Activated T-helper 1 cell treated with anti-CD3 and anti-CD28 coated beads, Interleukin-12 subunit alpha, Interleukin-12 subunit beta, Interleukin-2, Interleukin-4 antibody, amounts not matched to agents 30 ng/mL and 10 ng/mL and 1 ng/mL, durations not matched to agents 14 hours and 24 hours and 36 hours (primary cell): ENCODE measurements at regions of chr11 and their contacts with region 1.

Region 1: GRCh38 chr11:72080256-72080974 is at the starts of genes LRRC51 and NUMA1:
- DNase-seq: peak; percentile 99
- H3K4me3 Mint-ChIP-seq: peak within 1 kb of the TSS; percentile 95
- H3K27ac Mint-ChIP-seq: peak within 1 kb of the TSS; percentile 93
- H3K4me1 Mint-ChIP-seq: peaks cover 49% of the 10 kb centered on the region
- H3K27me3 Mint-ChIP-seq: no peaks in the 10 kb centered on the region
- total RNA-seq, gene LRRC51: 5.7 and 8.2 TPM in 2 replicates
- total RNA-seq, gene NUMA1: 141 and 150 TPM in 2 replicates

Region 2: DNA sequence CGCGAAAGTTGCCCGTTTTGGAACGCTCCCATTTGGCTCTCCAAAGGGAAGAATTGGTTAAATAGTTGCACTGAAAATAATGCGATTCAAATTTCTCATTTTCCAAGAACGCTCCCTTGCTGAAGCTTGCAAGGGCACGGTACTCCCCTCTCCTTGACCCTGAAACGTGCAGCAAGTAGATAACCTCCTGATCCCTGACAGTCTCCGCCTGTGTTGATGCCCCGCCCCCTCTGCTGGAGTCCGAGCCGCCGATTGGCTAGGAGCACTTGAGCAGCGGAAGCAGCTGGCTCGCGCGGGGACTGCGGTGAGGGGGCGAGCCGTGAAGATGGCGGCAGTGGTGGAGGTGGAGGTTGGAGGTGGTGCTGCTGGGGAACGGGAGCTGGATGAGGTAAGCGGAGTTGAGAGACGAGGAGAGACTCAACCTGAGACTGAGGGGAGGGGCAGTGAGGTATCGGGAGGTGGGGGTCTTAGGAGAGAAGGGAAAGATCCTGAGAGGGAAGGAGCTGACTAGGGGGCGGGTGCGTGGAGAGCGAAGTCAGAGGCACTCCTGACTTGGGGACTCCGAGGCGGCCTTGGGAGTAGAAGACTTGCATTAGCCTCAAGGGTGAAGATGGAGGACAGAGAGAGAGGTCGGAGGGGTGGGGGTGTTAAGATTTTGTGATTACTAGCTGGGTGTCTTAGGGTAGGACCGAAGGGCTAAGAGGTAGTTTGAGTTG is 151.5 kb before region 1 on chr11 and contains the start of gene RNF121:
- intact Hi-C with region 1: loop called (anchors 1 kb)
- DNase-seq: peak; percentile 96
- H3K4me3 Mint-ChIP-seq: peak within 1 kb of the TSS; percentile 98
- H3K27ac Mint-ChIP-seq: peak within 1 kb of the TSS; percentile 95
- H3K4me1 Mint-ChIP-seq: peaks cover 51% of the 10 kb centered on the region
- H3K27me3 Mint-ChIP-seq: no peaks in the 10 kb centered on the region
- total RNA-seq, gene RNF121: 65.8 and 70.3 TPM in 2 replicates

Region 3: GRCh38 chr11:72040726-72041441 is 39.5 kb before region 1 on chr11:
- intact Hi-C with region 1: loop called (anchors 1 kb)
- DNase-seq: peak; percentile 59
- H3K4me3 Mint-ChIP-seq: no peak overlapping the region
- H3K27ac Mint-ChIP-seq: no peak overlapping the region
- H3K4me1 Mint-ChIP-seq: peaks cover 23% of the 10 kb centered on the region
- H3K27me3 Mint-ChIP-seq: no peaks in the 10 kb centered on the region

Region 4: GRCh38 chr11:72102946-72103753 is 22.7 kb after region 1 on chr11 and contains the start of gene LAMTOR1:
- intact Hi-C with region 1: loop called (anchors 1 kb)
- DNase-seq: peak; percentile 97
- H3K4me3 Mint-ChIP-seq: peak within 1 kb of the TSS; percentile 95
- H3K27ac Mint-ChIP-seq: peak within 1 kb of the TSS; percentile 87
- H3K4me1 Mint-ChIP-seq: peaks cover 41% of the 10 kb centered on the region
- H3K27me3 Mint-ChIP-seq: no peaks in the 10 kb centered on the region
- total RNA-seq, gene LAMTOR1: 70.2 and 77.7 TPM in 2 replicates

Region 5: DNA sequence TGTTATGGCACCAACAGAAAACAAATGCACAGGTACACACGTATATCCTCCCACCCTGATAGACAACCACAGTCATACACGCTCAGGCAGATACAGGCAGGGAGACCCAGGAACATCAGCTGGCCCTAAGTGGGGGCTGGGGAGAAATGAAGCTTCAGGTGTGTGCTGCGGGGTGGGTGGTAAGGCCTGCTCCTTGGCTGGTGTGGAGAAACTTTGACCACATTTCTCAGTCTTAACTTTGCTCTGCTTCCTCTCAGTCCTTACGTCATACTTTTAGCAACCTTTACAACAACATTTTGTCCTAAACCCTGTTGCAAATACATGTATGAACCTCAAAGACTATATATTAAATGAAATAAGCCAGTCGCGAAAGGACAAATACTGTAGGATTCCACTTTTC is 38.8 kb after region 1 on chr11:
- intact Hi-C with region 1: no loop called
- DNase-seq: no peak
- H3K4me3 Mint-ChIP-seq: no peak overlapping the region
- H3K27ac Mint-ChIP-seq: no peak overlapping the region
- H3K4me1 Mint-ChIP-seq: no peaks in the 10 kb centered on the region
- H3K27me3 Mint-ChIP-seq: peaks cover 2% of the 10 kb centered on the region

Region 6: DNA sequence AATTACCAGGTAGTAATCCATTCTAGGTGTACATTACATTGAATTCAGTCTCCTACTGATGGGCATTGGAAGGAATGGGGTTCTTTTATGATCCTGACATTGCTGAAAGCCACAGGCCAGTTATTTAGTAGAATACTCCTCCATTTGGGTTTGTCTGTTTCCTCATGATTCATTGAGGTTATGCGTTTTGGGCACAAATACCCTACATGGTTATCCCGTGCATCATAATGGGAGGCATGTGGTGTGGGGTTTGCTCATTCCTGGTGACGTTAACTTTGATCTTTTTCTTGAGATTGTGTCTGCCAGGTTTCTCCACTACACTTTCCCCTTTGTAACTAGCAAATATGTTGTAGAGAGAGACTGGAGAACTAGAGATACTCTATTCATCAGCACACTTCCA is 60.7 kb after region 1 on chr11:
- intact Hi-C with region 1: loop called (anchors 5 kb)
- DNase-seq: no peak
- H3K4me3 Mint-ChIP-seq: no peak overlapping the region
- H3K27ac Mint-ChIP-seq: peak overlapping the region; percentile 41
- H3K4me1 Mint-ChIP-seq: peaks cover 33% of the 10 kb centered on the region
- H3K27me3 Mint-ChIP-seq: peaks cover 14% of the 10 kb centered on the region